Activated CD8-positive, alpha-beta memory T cell treated with anti-CD3 and anti-CD28 coated beads, Interleukin-2, amount 10 ng/mL, durations not matched to agents 7 days and 5 days (primary cell): ENCODE measurements at regions of chr6 and their contacts with region 1.

Region 1: GRCh38 chr6:33136310-33136900 is 55.9 kb downstream of the COL11A2 start:
- DNase-seq: no peak
- ATAC-seq: no peak
- H3K4me3 Mint-ChIP-seq: no peak overlapping the region
- H3K27ac Mint-ChIP-seq: no peak overlapping the region
- H3K4me1 Mint-ChIP-seq: no peaks in the 10 kb centered on the region
- H3K27me3 Mint-ChIP-seq: peaks cover 43% of the 10 kb centered on the region

Region 2: GRCh38 chr6:33095681-33096080 is 40.7 kb before region 1 on chr6:
- CTCF ChIA-PET with region 1: no interaction called
- DNase-seq: no peak
- ATAC-seq: no peak
- H3K4me3 Mint-ChIP-seq: no peak overlapping the region
- H3K27ac Mint-ChIP-seq: no peak overlapping the region
- H3K4me1 Mint-ChIP-seq: peaks cover 3% of the 10 kb centered on the region
- H3K27me3 Mint-ChIP-seq: peaks cover 54% of the 10 kb centered on the region

Region 3: GRCh38 chr6:33126101-33126714 is 10.2 kb before region 1 on chr6:
- CTCF ChIA-PET with region 1: interaction called, 24 read pairs
- DNase-seq: peak; percentile 73
- ATAC-seq: peak; percentile 56
- H3K4me3 Mint-ChIP-seq: no peak overlapping the region
- H3K27ac Mint-ChIP-seq: no peak overlapping the region
- H3K4me1 Mint-ChIP-seq: peaks cover 21% of the 10 kb centered on the region
- H3K27me3 Mint-ChIP-seq: peaks cover 23% of the 10 kb centered on the region